ENCODE measurements at regions of chr12 and their contacts with region 1.

Region 1: DNA sequence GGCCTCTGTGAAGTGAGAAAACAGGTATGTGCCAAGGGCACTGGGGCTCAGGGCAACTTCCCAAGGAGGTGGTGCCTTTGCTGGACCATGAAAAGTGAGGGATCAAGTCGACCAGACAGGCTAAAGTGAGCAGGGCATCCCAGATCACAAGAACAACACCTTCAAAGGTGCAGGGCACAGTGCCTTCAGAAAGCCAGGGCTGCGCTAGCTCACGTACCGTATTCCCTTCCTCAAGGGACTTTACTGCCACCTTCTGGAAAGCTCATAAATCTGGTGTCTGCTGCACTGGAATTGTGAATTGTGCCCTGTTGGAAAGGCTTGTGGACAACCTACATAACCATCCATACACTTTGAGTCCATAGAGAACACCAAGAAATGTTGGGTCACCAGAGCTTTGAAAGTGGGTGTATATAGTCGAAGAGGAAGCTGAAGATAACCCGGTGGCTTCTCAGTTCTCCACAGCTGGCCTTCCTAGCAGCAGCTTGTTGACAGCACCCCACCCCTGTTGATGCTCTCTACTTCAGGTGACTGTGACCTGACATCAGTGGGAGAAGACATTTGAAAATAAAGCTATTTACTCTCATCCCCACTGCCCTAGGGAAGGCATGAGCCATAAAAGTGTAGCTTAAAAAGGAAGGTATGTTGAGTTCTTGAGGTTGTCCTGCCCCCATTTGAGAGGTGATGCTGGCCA is 24.5 kb downstream of the FIGNL2 start:
- DNase-seq: peak; percentile 50
- H3K4me3 Mint-ChIP-seq: no peak overlapping the region
- H3K27ac Mint-ChIP-seq: no peak overlapping the region
- H3K4me1 Mint-ChIP-seq: peaks cover 28% of the 10 kb centered on the region
- H3K27me3 Mint-ChIP-seq: no peaks in the 10 kb centered on the region

Region 2: GRCh38 chr12:51351913-51352532 is 472.0 kb before region 1 on chr12:
- CTCF ChIA-PET with region 1: no interaction called
- intact Hi-C with region 1: no loop called
- DNase-seq: peak; percentile 68
- H3K4me3 Mint-ChIP-seq: no peak overlapping the region
- H3K27ac Mint-ChIP-seq: no peak overlapping the region
- H3K4me1 Mint-ChIP-seq: peaks cover 5% of the 10 kb centered on the region
- H3K27me3 Mint-ChIP-seq: no peaks in the 10 kb centered on the region

Region 3: DNA sequence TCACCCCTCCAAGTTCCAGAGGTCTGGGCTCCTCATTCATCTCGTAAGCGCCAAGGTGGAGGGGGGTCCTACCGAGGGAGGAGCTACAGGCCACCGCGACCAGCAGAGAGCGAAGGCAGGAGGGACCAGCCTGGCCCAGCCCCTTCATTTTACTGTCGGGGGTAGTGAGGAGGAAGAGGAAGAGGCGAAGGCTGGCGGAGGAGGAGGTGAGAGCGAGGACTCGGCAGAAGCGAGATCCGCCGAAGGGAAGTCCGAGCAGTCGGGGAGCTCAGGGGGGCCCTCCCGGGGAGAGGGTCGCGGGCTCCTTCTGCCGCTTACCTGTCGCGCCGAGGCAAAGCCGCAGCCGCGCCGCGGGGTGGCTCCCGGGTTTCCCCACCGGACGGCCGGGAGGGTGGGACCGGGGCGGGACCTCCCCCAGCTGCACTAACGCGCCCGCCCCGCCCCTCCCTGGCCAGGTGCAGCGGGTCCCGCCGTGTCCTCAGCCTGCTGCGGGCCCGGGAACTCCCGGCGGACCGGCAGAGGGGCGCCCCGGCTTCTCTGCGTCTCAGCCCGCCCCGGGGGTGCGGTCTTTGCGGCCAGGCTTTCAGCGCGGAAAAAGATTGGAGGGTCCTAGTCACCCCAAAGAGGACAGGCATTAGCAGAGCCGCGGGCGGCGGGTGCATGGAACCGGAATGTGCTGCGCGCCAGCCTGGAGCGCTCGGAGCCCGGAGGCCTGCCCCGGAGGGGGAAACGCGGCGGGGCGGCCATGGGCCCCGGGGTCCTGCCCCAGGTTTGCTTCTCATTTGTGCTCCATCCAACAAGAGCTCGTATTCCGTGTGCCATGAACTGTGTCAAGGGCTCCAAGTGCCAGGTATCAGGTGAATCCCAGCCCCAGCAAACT is 432.5 kb before region 1 on chr12 and contains the start of gene GALNT6:
- CTCF ChIA-PET with region 1: interaction called, 3 read pairs
- intact Hi-C with region 1: loop called (anchors 10 kb)
- DNase-seq: peak; percentile 68
- H3K4me3 Mint-ChIP-seq: peak within 1 kb of the TSS; percentile 83
- H3K27ac Mint-ChIP-seq: peak within 1 kb of the TSS; percentile 38
- H3K4me1 Mint-ChIP-seq: peaks cover 71% of the 10 kb centered on the region
- H3K27me3 Mint-ChIP-seq: no peaks in the 10 kb centered on the region
- total RNA-seq, gene GALNT6: 5.1 to 5.4 TPM

Region 4: GRCh38 chr12:51590347-51591019 is 233.5 kb before region 1 on chr12:
- CTCF ChIA-PET with region 1: no interaction called
- intact Hi-C with region 1: loop called (anchors 5 kb)
- DNase-seq: peak; percentile 76
- H3K4me3 Mint-ChIP-seq: peak overlapping the region; percentile 80
- H3K27ac Mint-ChIP-seq: no peak overlapping the region
- H3K4me1 Mint-ChIP-seq: peaks cover 12% of the 10 kb centered on the region
- H3K27me3 Mint-ChIP-seq: peaks cover 47% of the 10 kb centered on the region

Region 5: DNA sequence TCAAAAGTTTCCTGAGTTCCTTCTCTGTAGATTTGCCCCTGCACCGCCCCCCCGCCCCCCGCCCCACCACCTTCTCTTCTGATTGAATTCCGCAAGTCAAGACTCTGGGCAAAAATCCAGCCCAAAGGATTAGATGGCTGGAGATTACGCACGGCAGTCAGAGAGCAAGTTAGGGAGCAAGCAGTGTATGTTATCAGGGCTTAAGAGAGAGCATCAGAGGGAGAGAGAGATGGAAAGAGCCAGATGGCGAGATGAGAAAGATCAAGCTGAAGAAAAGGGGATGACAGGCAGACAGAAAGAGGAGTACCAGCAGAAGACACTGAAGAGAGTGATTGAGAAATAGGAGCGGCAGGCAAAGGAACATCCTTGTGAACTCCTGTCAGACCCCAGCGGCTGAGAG is 50.0 kb after region 1 on chr12:
- CTCF ChIA-PET with region 1: interaction called, 10 read pairs
- intact Hi-C with region 1: loop called (anchors 2 kb)
- DNase-seq: no peak
- H3K4me3 Mint-ChIP-seq: no peak overlapping the region
- H3K27ac Mint-ChIP-seq: no peak overlapping the region
- H3K4me1 Mint-ChIP-seq: peaks cover 9% of the 10 kb centered on the region
- H3K27me3 Mint-ChIP-seq: peaks cover 15% of the 10 kb centered on the region